Activated CD4-positive, alpha-beta memory T cell treated with anti-CD3 and anti-CD28 coated beads, Interleukin-2, amount 10 ng/mL, durations not matched to agents 7 days and 5 days (primary cell): ENCODE measurements at regions of chr11 and their contacts with region 1.

Region 1: DNA sequence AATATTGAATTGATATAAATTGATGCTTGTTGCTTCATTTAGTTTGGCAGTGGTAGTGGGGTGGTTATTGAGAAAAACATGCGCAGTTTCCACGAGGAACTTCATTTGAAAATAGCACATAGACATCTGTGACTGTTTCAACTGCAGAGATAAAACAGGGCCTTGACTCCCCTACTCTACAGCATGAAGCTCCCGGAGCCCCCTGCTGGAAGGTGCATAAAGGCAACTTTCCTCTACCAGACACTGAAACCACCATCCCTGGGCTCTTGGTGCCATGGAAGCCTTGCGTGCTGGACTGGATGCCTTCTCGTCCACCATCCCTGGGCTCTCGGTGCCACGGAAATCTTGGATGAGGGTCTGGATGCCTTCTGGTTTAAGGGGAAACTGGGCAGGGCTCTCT is 195.9 kb downstream of the CSNK2A3 start:
- DNase-seq: peak; percentile 44
- H3K4me3 Mint-ChIP-seq: no peak overlapping the region
- H3K27ac Mint-ChIP-seq: no peak overlapping the region
- H3K4me1 Mint-ChIP-seq: peaks cover 21% of the 10 kb centered on the region
- H3K27me3 Mint-ChIP-seq: peaks cover 5% of the 10 kb centered on the region

Region 2: DNA sequence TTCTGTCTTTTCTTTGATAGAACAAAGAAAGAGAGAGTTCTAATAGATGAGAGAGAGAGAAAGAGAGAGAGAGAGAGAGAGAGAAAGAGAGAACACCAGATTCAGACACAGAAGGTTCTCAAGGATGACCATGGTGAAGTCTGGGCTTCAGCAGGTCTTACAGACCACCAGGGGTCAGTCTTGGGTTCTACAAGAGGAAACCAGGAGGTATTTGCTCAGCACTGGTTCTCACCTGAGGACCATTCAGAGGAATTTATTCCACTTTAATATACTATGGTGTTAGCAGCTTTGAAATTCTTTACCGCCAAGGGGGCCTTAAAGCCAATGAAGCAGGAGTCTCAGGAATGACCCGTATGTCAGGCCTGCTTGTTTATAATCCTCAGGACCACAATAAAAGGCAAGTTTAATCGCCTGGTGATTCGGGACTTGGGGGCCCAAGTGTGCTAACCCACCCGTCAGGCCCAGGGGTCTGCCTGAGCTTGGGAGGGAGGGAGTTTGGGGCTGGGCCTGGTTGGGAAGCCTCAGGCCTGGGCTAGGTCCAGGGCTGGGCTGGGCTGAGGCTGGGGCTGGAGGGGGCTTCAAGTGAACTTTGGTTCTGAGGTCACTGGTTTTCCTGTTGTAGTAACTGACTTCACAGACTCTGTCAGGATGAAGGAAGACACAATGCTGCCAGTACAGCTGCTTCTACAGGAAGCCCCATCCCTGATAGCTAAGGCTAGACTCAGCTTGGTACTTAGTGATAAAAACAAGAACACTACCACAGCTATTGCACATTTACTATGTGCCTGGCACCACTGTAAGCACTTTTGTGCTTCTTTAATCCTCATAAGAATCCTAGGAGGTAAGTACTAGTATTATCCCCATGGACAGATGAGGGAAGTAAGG is 120.1 kb before region 1 on chr11:
- CTCF ChIA-PET with region 1: interaction called, 29 read pairs
- POLR2A ChIA-PET with region 1: no interaction called
- DNase-seq: peak; percentile 30
- H3K4me3 Mint-ChIP-seq: no peak overlapping the region
- H3K27ac Mint-ChIP-seq: no peak overlapping the region
- H3K4me1 Mint-ChIP-seq: no peaks in the 10 kb centered on the region
- H3K27me3 Mint-ChIP-seq: peaks cover 10% of the 10 kb centered on the region

Region 3: DNA sequence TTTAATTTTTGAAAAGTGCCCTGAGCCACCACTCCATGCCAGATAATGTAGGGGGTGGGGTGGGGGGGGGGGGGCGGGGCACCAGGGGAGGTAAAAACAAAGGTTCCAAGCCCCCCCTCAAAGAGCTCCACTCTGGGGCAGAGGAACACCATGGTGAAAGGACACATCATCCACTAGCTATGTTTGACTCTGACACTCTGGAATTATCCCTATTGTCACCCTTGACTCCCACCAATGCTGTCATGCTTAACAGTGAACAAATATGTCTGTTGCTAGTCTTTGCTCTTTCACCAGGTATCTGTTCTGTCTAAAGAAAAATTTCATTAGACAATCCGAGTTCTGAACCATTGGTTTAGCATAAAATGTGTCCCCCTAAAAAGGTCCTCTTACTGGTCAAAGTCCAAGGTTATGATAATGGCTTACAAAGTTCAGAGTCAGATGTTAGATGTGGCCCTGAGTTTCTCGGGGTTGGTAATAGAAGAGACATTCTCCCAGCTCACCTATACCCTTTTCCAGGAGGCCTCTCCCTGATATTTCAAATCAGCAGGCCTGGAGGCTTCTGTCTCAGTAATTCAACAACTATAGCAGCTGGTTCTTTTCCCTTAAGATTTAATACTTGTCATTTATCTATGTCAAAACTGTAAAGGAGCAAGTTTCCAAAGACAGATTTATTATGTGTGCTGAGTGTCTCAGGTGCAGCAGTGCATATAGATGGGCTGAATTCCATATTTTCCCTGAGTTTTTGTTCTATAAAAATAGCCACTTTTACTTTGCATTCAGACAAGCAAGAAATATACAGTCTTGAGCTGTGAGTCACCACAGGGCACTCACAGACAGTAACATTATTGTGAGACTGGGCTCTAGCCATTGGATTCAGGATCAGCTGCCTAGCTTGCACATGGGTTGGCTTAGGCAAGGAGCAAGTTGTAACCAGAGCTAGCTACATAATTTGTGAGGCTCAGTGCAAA is 21.8 kb after region 1 on chr11:
- CTCF ChIA-PET with region 1: no interaction called
- POLR2A ChIA-PET with region 1: no interaction called
- DNase-seq: no peak
- H3K4me3 Mint-ChIP-seq: no peak overlapping the region
- H3K27ac Mint-ChIP-seq: no peak overlapping the region
- H3K4me1 Mint-ChIP-seq: no peaks in the 10 kb centered on the region
- H3K27me3 Mint-ChIP-seq: no peaks in the 10 kb centered on the region